ENCODE measurements at regions of chr17 and their contacts with region 1.

Region 1: DNA sequence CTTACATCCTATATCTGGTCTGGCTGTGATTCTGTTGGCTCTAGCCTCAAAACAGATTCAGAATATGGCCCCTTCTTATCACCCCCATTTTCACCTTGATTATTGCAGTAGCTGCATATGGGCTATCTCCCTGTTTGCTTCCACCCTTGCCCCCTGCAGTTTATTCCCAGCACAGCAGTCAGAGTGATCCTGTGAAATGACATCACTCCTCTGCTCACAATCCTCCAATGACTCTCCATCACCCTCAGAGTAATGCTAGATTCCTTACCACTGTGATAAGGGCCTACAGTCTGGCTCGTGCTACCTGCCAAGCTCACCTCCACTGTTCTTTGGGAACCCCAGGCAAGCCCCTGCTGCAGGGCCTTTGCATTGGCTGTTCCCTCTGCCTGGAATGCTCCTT is 92.5 kb downstream of the ASIC2 start:
- DNase-seq: no peak
- H3K4me3 ChIP-seq: no peak overlapping the region
- H3K27ac ChIP-seq: no peak overlapping the region
- H3K4me1 ChIP-seq: no peaks in the 10 kb centered on the region
- H3K27me3 ChIP-seq: peaks cover 4% of the 10 kb centered on the region
- CTCF ChIP-seq: no peak
- EP300 ChIP-seq: no peak
- POLR2A ChIP-seq: no peak

Region 2: DNA sequence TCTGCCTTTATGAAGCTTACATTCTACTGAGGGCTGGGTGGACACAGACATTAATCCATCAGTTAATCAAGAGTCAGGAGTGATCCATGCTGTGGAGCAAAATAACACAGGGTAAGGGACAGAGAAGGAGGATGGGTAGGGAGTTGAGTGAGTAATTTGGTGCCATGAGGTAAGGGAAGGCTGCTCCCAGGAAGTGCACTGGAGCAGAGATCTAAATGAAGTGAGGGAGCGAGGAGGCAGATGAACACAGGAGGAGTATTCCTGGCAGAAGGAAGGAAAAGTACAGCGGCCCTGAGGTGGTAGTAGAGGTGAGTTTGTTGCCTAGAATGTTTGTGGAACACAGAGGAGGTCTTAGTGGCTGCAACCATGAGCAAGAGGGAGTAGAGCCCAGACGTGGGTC is 57.7 kb after region 1 on chr17:
- in situ Hi-C with region 1: loop called in 1 of 4 experiments (anchors 10 kb)
- intact Hi-C with region 1: no loop called
- DNase-seq: no peak
- H3K4me3 ChIP-seq: no peak overlapping the region
- H3K27ac ChIP-seq: no peak overlapping the region
- H3K4me1 ChIP-seq: no peaks in the 10 kb centered on the region
- H3K27me3 ChIP-seq: no peaks in the 10 kb centered on the region
- CTCF ChIP-seq: no peak
- EP300 ChIP-seq: no peak
- POLR2A ChIP-seq: no peak

Region 3: DNA sequence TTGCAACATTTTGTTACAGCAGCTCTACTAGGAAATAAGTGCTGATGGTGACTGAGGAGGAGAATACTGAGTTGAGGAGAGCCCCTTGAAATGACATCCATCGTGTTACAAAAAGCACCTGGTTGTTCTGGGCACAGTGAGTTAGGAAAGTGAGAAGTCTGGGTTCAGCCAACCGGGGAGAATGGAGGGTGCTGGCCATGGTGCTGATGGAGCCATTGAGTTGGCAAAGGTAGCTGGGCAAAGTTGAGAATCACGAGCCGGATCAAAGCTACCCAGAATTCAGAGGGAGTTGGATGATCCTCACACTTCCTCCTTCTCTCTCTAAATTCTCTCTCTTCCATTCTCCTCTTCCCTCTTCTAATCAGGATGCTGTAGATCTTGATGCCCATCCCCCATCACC is 127.5 kb after region 1 on chr17:
- in situ Hi-C with region 1: loop called in 1 of 4 experiments (anchors 25 kb)
- intact Hi-C with region 1: no loop called
- DNase-seq: no peak
- H3K4me3 ChIP-seq: no peak overlapping the region
- H3K27ac ChIP-seq: no peak overlapping the region
- H3K4me1 ChIP-seq: no peaks in the 10 kb centered on the region
- H3K27me3 ChIP-seq: no peaks in the 10 kb centered on the region
- CTCF ChIP-seq: no peak
- EP300 ChIP-seq: no peak
- POLR2A ChIP-seq: no peak

Region 4: DNA sequence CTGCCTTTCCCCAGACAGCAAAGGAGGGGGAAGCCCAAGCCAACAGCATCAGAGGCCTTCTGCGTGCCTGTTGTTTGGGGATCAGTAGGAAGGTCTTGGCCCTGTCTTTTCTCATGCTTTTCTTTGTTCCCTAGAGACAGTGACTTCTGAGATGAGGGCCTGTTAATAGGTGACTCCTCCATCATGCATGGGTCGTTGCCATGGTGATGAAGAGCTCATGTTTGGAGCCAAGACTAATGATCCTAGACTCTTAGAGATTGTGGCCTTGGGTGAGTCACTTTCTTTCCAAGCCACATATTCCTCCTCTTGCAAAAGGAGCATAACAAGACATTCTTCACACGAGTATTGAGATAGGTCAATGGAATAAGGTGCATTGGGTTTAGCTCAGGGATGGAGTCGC is 293.6 kb after region 1 on chr17:
- in situ Hi-C with region 1: loop called in 1 of 4 experiments (anchors 25 kb)
- intact Hi-C with region 1: no loop called
- DNase-seq: no peak
- H3K4me3 ChIP-seq: no peak overlapping the region
- H3K27ac ChIP-seq: no peak overlapping the region
- H3K4me1 ChIP-seq: peaks cover 0 to 3% (median 0%) of the 10 kb centered on the region in 4 donors
- H3K27me3 ChIP-seq: no peaks in the 10 kb centered on the region
- CTCF ChIP-seq: no peak
- EP300 ChIP-seq: no peak
- POLR2A ChIP-seq: no peak

Region 5: DNA sequence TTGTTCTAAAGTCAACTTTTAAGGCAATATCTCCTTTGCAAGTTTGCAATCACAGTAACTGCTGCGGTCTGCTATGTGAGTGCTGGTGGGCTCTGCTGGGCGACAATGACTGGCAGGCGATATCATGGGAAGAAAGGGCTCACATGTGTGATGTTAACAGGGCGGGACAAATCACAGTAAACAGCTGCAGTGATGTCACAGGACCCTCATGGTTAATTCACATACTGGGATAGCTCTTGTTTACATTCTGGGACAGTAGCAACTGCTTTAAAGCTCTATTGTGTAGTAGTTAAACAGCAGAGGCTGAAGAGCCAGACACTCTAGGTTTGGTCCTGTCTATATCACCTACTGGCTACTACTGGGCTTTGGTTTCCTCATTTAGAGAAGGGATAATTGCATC is 349.7 kb after region 1 on chr17:
- in situ Hi-C with region 1: no loop called
- intact Hi-C with region 1: no loop called
- DNase-seq: no peak
- H3K4me3 ChIP-seq: no peak overlapping the region
- H3K27ac ChIP-seq: no peak overlapping the region
- H3K4me1 ChIP-seq: no peaks in the 10 kb centered on the region
- H3K27me3 ChIP-seq: peaks cover 18% of the 10 kb centered on the region
- CTCF ChIP-seq: no peak
- EP300 ChIP-seq: no peak
- POLR2A ChIP-seq: no peak

Region 6: DNA sequence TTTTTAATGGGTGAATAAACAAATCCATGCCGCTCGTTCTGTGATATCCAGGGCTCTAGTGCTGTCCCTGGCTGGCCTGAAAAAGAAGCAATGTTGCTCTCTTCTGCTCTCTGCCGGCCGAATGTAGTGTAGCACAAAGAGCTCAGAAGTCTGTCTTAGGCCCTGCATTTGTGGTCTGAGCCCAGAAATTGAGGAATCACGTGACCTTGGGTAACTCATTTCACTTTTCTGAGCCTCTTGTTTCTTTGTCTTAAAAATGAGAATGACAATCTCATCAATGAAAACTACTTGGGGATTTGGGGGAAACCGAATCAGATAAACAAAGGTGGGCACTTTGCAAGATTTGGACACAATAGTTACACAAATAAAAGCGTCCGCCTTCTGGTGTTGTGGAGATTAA is 474.1 kb after region 1 on chr17:
- in situ Hi-C with region 1: loop called in 1 of 4 experiments (anchors 25 kb)
- intact Hi-C with region 1: no loop called
- DNase-seq: peak; percentile 46
- H3K4me3 ChIP-seq: no peak overlapping the region
- H3K27ac ChIP-seq: no peak overlapping the region
- H3K4me1 ChIP-seq: no peaks in the 10 kb centered on the region
- H3K27me3 ChIP-seq: no peaks in the 10 kb centered on the region
- CTCF ChIP-seq: peak; percentile 57 to 70 (median 59)
- EP300 ChIP-seq: no peak
- POLR2A ChIP-seq: no peak

Measured in transverse colon (tissue), 4 donors.